ENCODE measurements at regions of chr12 and their contacts with region 1.

Region 1: GRCh38 chr12:124906606-124907261 is 7.7 kb downstream of the UBC start:
- DNase-seq: peak; percentile 86 to 87
- H3K4me3 ChIP-seq: no peak overlapping the region
- H3K27ac ChIP-seq: no peak overlapping the region
- H3K4me1 ChIP-seq: peaks cover 40% of the 10 kb centered on the region
- H3K27me3 ChIP-seq: no peaks in the 10 kb centered on the region
- CTCF ChIP-seq: peak; percentile 97

Region 2: GRCh38 chr12:123094349-123095074 is 1812.2 kb before region 1 on chr12:
- CTCF ChIA-PET with region 1: no interaction called
- POLR2A ChIA-PET with region 1: no interaction called
- intact Hi-C with region 1: no loop called
- DNase-seq: peak; percentile 88 to 92
- H3K4me3 ChIP-seq: no peak overlapping the region
- H3K27ac ChIP-seq: peak overlapping the region; percentile 48
- H3K4me1 ChIP-seq: peaks cover 66% of the 10 kb centered on the region
- H3K27me3 ChIP-seq: no peaks in the 10 kb centered on the region
- CTCF ChIP-seq: no peak

Region 3: DNA sequence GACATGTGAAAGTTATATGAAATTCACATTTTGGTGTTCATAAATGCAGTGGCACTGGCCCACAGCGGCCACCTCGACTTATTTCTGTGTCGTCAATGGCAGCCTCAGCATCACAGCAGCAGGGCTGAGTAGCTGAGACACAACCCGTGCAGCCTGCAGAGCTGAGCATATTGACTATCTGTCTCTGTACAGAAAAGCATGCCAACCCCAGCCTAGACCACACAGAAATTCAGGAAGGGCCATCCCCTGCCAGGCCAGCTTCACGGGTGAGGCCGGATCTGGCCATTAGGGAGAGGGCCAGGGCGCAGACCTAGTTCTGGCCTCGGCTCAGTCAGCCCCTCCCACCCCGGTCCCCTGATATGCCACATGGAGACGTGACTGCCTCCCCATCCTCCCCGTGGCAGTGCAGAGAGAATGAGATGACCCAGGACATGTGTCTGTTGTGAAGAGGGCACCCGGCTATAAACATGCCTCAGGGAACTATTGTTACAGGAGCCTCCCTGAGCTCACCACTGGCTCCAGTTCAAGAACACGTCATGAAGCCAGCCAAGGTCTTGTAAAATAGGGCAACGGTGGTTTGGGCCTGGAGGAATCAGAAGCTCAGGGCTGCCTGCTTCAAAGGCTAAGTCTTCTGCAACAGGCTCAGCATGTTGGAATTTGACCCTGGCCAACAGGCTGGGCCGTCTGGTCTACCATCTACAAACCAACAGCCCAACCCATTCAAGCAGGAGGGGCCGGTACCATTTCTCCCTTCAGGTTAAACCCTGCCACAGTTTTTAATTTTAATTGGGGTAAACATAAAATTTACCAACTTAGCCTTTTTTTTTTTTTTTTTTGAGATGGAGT is 68.6 kb before region 1 on chr12:
- CTCF ChIA-PET with region 1: interaction called, 11 read pairs
- POLR2A ChIA-PET with region 1: interaction called, 3 read pairs
- intact Hi-C with region 1: no loop called
- DNase-seq: peak; percentile 88 to 97
- H3K4me3 ChIP-seq: no peak overlapping the region
- H3K27ac ChIP-seq: peak overlapping the region; percentile 31
- H3K4me1 ChIP-seq: peaks cover 23% of the 10 kb centered on the region
- H3K27me3 ChIP-seq: no peaks in the 10 kb centered on the region
- CTCF ChIP-seq: no peak

Region 4: DNA sequence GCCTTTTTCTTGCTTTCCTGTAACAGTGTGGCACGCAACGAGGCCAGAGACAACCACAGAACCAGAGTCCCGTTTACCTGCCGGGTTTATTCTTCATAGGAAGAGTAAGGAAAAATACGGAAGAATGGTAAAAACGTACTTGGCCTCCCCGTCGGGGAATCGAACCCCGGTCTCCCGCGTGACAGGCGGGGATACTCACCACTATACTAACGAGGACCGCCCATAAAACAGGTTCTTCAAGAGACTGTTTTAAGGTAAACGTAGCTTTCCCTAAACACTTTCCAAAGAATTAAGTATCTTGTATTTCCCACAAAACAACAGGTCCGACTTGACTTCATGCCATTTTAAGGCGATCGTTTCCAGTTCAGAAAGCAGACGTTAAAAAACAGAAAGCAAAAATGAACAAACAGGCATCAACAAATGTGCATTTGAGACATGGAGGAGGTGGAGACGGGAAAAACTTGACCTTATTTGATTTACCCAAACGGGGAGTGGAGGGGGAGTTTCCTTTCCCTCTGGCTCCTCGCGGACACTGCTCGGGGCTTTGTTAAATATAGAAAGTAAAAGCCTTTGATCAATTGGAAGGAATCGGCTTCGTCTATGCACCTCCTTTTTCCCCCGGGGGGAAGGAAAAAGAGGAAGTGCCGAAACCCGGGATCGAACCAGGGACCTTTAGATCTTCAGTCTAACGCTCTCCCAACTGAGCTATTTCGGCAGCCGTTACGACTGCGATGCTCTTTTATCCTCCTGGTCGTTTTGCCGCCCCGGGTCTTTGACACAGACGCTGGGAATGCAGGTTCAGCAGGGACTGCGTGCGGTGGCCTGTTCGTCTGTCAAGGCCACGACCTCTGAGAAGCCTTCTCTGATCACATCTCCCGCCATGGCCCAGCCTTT is 20.7 kb after region 1 on chr12:
- CTCF ChIA-PET with region 1: interaction called, 9 read pairs
- POLR2A ChIA-PET with region 1: interaction called, 25 read pairs
- intact Hi-C with region 1: no loop called
- DNase-seq: peak; percentile 81 to 93
- H3K4me3 ChIP-seq: peak overlapping the region; percentile 76
- H3K27ac ChIP-seq: peak overlapping the region; percentile 98
- H3K4me1 ChIP-seq: peaks cover 36% of the 10 kb centered on the region
- H3K27me3 ChIP-seq: no peaks in the 10 kb centered on the region
- CTCF ChIP-seq: no peak

Region 5: GRCh38 chr12:124940549-124941527 is 34.1 kb after region 1 on chr12:
- CTCF ChIA-PET with region 1: interaction called, 37 read pairs
- POLR2A ChIA-PET with region 1: interaction called, 7 read pairs
- intact Hi-C with region 1: loop called (anchors 1 kb)
- DNase-seq: peak; percentile 86 to 88
- H3K4me3 ChIP-seq: peak overlapping the region; percentile 67; the same call in 1 of the 2 replicates
- H3K27ac ChIP-seq: peak overlapping the region; percentile 86
- H3K4me1 ChIP-seq: peaks cover 23% of the 10 kb centered on the region
- H3K27me3 ChIP-seq: no peaks in the 10 kb centered on the region
- CTCF ChIP-seq: peak; percentile 76

Region 6: GRCh38 chr12:125124318-125124966 is 217.7 kb after region 1 on chr12:
- CTCF ChIA-PET with region 1: no interaction called
- POLR2A ChIA-PET with region 1: interaction called, 10 read pairs
- intact Hi-C with region 1: no loop called
- DNase-seq: peak; percentile 29 to 81
- H3K4me3 ChIP-seq: no peak overlapping the region
- H3K27ac ChIP-seq: peak overlapping the region; percentile 84
- H3K4me1 ChIP-seq: peaks cover 31% of the 10 kb centered on the region
- H3K27me3 ChIP-seq: no peaks in the 10 kb centered on the region
- CTCF ChIP-seq: no peak

Region 7: GRCh38 chr12:125134576-125134975 is 227.8 kb after region 1 on chr12:
- CTCF ChIA-PET with region 1: no interaction called
- POLR2A ChIA-PET with region 1: no interaction called
- intact Hi-C with region 1: no loop called
- DNase-seq: no peak
- H3K4me3 ChIP-seq: no peak overlapping the region
- H3K27ac ChIP-seq: no peak overlapping the region
- H3K4me1 ChIP-seq: peaks cover 4% of the 10 kb centered on the region; the same call in 1 of the 2 replicates
- H3K27me3 ChIP-seq: no peaks in the 10 kb centered on the region
- CTCF ChIP-seq: no peak

Region 8: DNA sequence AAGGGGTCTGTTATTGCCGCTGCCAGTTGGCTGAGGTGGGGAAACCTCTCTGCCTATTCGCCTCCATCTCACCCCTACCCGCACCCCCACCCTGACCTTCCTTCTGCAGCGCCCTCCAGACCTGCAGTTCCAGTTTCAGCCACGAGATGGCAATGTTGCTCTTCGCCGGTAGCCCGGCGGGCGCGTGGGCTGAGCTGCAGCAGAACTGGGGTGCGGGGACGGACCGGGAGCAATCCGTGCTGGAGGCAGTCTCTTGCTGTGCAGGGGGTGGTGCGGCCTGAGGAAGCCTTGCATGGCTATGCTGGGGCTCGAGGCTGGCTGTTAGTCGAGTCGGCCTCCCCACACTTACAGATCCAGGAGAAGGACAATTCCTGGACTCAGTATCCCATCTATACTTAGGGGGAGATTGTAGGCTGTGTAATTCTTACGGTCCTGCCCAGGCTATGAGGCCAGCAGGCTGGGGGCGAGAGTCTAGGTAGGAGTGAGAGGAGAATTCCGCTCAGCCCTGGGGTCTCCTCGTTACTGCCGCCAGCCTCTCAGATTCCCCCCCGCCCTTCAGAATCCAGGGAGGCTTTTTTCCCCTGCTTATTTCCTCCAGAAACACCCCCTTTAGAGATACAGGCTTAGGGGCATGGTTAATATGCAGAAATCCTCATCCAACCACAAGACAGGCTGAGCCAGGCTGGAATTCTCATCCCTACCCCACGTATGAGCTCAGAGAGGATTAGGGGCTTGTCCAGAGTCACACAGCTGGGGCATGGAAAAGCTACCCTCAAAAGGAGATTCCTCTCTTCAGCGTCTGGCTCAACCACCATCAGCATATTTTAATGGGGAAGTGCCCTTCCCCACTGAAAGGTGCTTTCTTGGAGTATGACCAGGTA is 276.7 kb after region 1 on chr12:
- CTCF ChIA-PET with region 1: no interaction called
- POLR2A ChIA-PET with region 1: no interaction called
- intact Hi-C with region 1: loop called (anchors 10 kb)
- DNase-seq: peak; percentile 59 to 74
- H3K4me3 ChIP-seq: no peak overlapping the region
- H3K27ac ChIP-seq: no peak overlapping the region
- H3K4me1 ChIP-seq: no peaks in the 10 kb centered on the region
- H3K27me3 ChIP-seq: peaks cover 61% of the 10 kb centered on the region
- CTCF ChIP-seq: peak; percentile 98

Region 9: GRCh38 chr12:125402874-125403789 is 496.4 kb after region 1 on chr12:
- CTCF ChIA-PET with region 1: no interaction called
- POLR2A ChIA-PET with region 1: no interaction called
- intact Hi-C with region 1: loop called (anchors 5 kb)
- DNase-seq: peak in 1 of 2 experiments; percentile 3
- H3K4me3 ChIP-seq: no peak overlapping the region
- H3K27ac ChIP-seq: no peak overlapping the region
- H3K4me1 ChIP-seq: no peaks in the 10 kb centered on the region
- H3K27me3 ChIP-seq: 0 out of 2 replicates have a peak, but pooled peaks cover 9% of the 10 kb centered on the region
- CTCF ChIP-seq: peak; percentile 78

Measured in PC-9 (cell line).